ENCODE measurements at regions of chr3 and their contacts with region 1.

Region 1: DNA sequence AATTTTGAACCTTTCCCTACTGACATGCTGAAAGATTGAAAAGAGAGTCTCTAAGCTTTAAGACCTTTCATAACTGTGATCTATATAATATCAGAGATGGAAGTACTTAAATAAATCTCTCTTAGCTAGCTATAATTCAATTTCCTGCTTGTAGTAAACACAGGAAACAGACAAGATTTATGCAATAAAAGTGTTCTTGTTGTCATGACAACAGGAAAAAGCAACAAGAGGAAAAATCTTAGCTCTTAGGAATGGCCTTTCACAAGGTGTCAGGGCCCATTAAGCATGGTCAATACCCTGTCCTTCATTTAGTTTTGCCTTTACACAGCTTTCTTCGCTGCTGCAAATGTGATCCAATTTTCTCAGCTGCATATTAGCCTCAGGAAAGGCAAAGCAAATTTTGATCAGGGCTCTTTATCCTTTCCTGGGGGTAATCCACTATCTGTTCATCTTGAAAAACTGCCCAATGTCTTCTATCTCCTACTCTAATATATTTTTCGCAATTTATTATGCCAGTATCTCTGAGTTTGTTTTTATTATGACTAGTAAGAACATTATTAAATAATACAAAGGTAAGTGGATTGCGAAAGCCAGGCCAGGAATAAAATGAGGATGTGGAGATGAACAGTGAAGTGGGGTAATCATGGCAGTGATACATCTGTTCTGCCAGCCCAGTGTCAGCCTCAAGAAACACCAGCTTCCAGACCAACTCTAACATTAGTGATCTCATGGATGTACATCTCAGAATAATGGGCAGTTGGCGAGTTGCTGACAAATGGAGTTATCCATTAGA is 28.7 kb downstream of the SIDT1 start:
- DNase-seq: peak in 4 of 5 donors; percentile 31 to 57 (median 38)
- H3K4me3 ChIP-seq: no peak overlapping the region
- H3K4me3 Mint-ChIP-seq: peak overlapping the region in 6 of 8 donors; percentile 13 to 69 (median 25)
- H3K27ac ChIP-seq: peak overlapping the region; percentile 1
- H3K27ac Mint-ChIP-seq: peak overlapping the region; percentile 25 to 94 (median 77)
- H3K4me1 ChIP-seq: peaks cover 41% of the 10 kb centered on the region
- H3K4me1 Mint-ChIP-seq: peaks cover 49 to 63% (median 58%) of the 10 kb centered on the region in 4 donors
- H3K27me3 ChIP-seq: no peaks in the 10 kb centered on the region
- H3K27me3 Mint-ChIP-seq: no peaks in the 10 kb centered on the region

Region 2: DNA sequence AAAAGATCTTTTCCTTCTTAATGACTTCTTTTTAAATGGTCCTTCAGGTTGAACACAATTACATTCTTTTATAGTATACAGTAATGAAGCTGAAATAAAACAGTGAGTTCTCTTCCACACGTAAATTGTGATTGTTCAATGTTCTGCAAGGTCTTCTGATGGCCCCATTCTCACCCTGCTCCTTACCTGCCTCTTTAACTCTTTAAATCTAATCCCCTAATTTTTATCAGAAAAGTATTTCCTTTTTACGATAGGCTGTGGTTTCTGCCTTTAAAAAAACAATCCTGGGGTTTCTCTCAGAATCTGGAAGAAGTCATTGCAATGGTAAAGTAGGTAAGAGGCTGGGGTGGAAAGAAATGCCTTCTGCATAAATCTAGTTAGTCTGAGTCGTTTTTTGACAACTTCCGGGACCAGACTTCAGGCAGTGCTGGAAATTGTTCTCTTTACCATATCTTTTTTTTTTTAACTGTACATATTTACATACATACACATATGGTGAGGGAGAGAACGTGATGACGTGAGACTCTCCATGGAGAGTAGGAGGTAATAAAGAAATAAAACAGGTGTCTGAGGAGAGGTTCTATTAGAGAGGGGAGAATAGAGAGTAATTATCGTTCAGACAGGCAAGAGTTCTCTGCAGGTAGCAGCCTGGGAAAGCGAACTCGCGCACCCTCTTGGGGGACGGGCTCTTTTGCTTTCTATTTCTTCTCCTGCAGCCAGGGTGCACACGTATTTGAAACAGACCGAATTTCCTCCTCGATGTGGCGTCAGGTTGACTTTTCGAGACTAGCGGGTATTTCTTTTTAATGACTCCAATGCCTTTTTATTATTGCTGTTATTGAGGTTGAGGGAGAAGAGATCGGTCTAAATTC is 29.0 kb before region 1 on chr3 and contains the start of gene SIDT1:
- CTCF ChIA-PET with region 1: interaction called, 6 read pairs
- POLR2A ChIA-PET with region 1: interaction called, 10 read pairs
- intact Hi-C with region 1: loop called (anchors 2 kb)
- DNase-seq: peak; percentile 77 to 84 (median 80)
- H3K4me3 ChIP-seq: peak within 1 kb of the TSS; percentile 79 to 96
- H3K4me3 Mint-ChIP-seq: peak within 1 kb of the TSS; percentile 97 to 100 (median 99)
- H3K27ac ChIP-seq: peak within 1 kb of the TSS; percentile 90
- H3K27ac Mint-ChIP-seq: peak within 1 kb of the TSS; percentile 95 to 100 (median 100)
- H3K4me1 ChIP-seq: peaks cover 45% of the 10 kb centered on the region
- H3K4me1 Mint-ChIP-seq: peaks cover 36 to 55% (median 45%) of the 10 kb centered on the region in 4 donors
- H3K27me3 ChIP-seq: no peaks in the 10 kb centered on the region
- H3K27me3 Mint-ChIP-seq: no peaks in the 10 kb centered on the region
- total RNA-seq, gene SIDT1: 55.0 to 56.1 TPM